ENCODE measurements at regions of chr9 and their contacts with region 1.

Region 1: GRCh38 chr9:128863647-128864046 is 18.1 kb downstream of the KYAT1 start:
- DNase-seq: peak; percentile 85 to 90
- ATAC-seq: peak; percentile 90 to 100 (median 98)
- H3K4me3 ChIP-seq: no peak overlapping the region
- H3K4me3 Mint-ChIP-seq: no peak overlapping the region
- H3K27ac ChIP-seq: no peak overlapping the region
- H3K27ac Mint-ChIP-seq: peak overlapping the region in 1 of 2 donors; percentile 14
- H3K4me1 ChIP-seq: peaks cover 5% of the 10 kb centered on the region
- H3K4me1 Mint-ChIP-seq: peaks cover 0 to 6% of the 10 kb centered on the region in 2 donors
- H3K27me3 ChIP-seq: no peaks in the 10 kb centered on the region
- H3K27me3 Mint-ChIP-seq: no peaks in the 10 kb centered on the region
- CTCF ChIP-seq: peak; percentile 94

Region 2: DNA sequence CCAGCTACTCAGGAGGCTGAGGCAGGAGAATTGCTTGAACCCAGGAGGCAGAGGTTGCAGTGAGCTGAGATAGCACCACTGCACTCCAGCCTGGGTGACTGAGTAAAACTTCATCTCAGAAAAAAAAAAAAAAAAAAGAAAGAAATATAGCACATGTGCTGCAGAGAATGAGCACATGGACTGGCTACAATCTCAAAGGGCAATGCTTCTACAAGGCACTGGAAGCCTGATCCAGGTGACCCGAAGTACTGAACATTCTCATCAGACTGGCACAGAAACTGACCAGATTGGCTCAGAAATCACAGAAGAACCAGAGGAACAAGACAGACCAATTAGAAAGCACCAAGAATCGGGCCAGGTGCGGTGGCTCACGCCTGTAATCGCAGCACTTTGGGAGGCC is 211.8 kb before region 1 on chr9:
- intact Hi-C with region 1: no loop called
- DNase-seq: no peak
- ATAC-seq: no peak
- H3K4me3 ChIP-seq: no peak overlapping the region
- H3K4me3 Mint-ChIP-seq: no peak overlapping the region
- H3K27ac ChIP-seq: no peak overlapping the region
- H3K27ac Mint-ChIP-seq: no peak overlapping the region
- H3K4me1 ChIP-seq: peaks cover 7% of the 10 kb centered on the region
- H3K4me1 Mint-ChIP-seq: peaks cover 0 to 3% of the 10 kb centered on the region in 2 donors
- H3K27me3 ChIP-seq: no peaks in the 10 kb centered on the region
- H3K27me3 Mint-ChIP-seq: no peaks in the 10 kb centered on the region
- CTCF ChIP-seq: no peak

Region 3: GRCh38 chr9:128927731-128928411 is 64.2 kb after region 1 on chr9:
- intact Hi-C with region 1: loop called (anchors 1 kb)
- DNase-seq: peak; percentile 44 to 79
- ATAC-seq: peak; percentile 48 to 83 (median 78)
- H3K4me3 ChIP-seq: no peak overlapping the region
- H3K4me3 Mint-ChIP-seq: no peak overlapping the region
- H3K27ac ChIP-seq: no peak overlapping the region
- H3K27ac Mint-ChIP-seq: peak overlapping the region; percentile 50 to 74
- H3K4me1 ChIP-seq: peaks cover 15% of the 10 kb centered on the region
- H3K4me1 Mint-ChIP-seq: peaks cover 9 to 30% of the 10 kb centered on the region in 2 donors
- H3K27me3 ChIP-seq: no peaks in the 10 kb centered on the region
- H3K27me3 Mint-ChIP-seq: no peaks in the 10 kb centered on the region
- CTCF ChIP-seq: peak; percentile 87

Region 4: GRCh38 chr9:128947422-128948301 is 84.0 kb after region 1 on chr9 and contains the starts of genes DOLK and NUP188:
- intact Hi-C with region 1: loop called (anchors 5 kb)
- DNase-seq: peak; percentile 98 to 100
- ATAC-seq: peak; percentile 85 to 97 (median 92)
- H3K4me3 ChIP-seq: peak within 1 kb of the TSS; percentile 89
- H3K4me3 Mint-ChIP-seq: peak within 1 kb of the TSS; percentile 95
- H3K27ac ChIP-seq: peak within 1 kb of the TSS; percentile 94
- H3K27ac Mint-ChIP-seq: peak within 1 kb of the TSS; percentile 86 to 96
- H3K4me1 ChIP-seq: peaks cover 22% of the 10 kb centered on the region
- H3K4me1 Mint-ChIP-seq: peaks cover 29% of the 10 kb centered on the region in 2 donors
- H3K27me3 ChIP-seq: no peaks in the 10 kb centered on the region
- H3K27me3 Mint-ChIP-seq: no peaks in the 10 kb centered on the region
- CTCF ChIP-seq: no peak
- total RNA-seq, gene DOLK: 4.8 to 8.9 (median 6.7) TPM
- total RNA-seq, gene NUP188: 53.9 to 66.4 (median 58.3) TPM

Measured in natural killer cell (primary cell).